Activated CD4-positive, alpha-beta memory T cell treated with anti-CD3 and anti-CD28 coated beads for 36 hours (primary cell): ENCODE measurements at regions of chr12 and their contacts with region 1.

Region 1: GRCh38 chr12:67482751-67483671 is 165.5 kb upstream of the DYRK2 start:
- DNase-seq: peak; percentile 86
- H3K4me3 Mint-ChIP-seq: no peak overlapping the region
- H3K27ac Mint-ChIP-seq: peak overlapping the region; percentile 5
- H3K4me1 Mint-ChIP-seq: peaks cover 41% of the 10 kb centered on the region
- H3K27me3 Mint-ChIP-seq: no peaks in the 10 kb centered on the region

Region 2: GRCh38 chr12:67202043-67203012 is 280.7 kb before region 1 on chr12:
- CTCF ChIA-PET with region 1: no interaction called
- POLR2A ChIA-PET with region 1: no interaction called
- intact Hi-C with region 1: no loop called
- DNase-seq: no peak
- H3K4me3 Mint-ChIP-seq: no peak overlapping the region
- H3K27ac Mint-ChIP-seq: no peak overlapping the region
- H3K4me1 Mint-ChIP-seq: no peaks in the 10 kb centered on the region
- H3K27me3 Mint-ChIP-seq: peaks cover 20% of the 10 kb centered on the region

Region 3: DNA sequence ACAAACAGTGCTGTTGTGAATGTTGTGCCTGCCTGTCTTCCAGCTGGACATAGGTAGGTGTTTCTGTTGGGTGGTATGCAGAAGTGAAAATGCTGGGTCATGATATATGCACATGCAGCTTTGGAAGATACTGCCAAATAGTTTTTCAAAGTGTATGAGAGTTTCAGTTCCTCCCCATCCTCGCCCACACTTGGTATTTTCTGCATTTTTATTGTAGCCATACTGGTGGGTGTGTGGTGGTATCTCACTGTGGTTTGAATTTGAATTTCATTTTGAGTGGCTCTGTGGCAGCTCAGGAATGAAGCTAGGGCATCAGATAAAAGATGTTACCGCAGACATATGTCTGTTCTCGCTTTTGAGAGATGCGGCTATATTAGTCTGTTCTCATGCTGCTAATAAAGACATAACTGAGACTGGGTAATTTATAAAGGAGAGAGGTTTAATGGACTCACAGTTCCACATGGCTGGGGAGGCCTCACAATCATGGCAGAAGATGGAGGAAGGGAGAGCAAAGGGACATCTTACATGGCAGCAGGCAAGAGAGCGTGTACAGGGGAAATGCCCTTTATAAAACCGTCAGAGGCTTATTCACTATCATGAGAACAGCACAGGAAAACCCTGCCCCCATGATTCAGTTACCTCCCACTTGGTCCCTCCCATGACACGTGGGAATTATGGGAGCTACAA is 30.7 kb before region 1 on chr12:
- CTCF ChIA-PET with region 1: no interaction called
- POLR2A ChIA-PET with region 1: no interaction called
- intact Hi-C with region 1: loop called (anchors 2 kb)
- DNase-seq: peak; percentile 42
- H3K4me3 Mint-ChIP-seq: peak overlapping the region; percentile 1
- H3K27ac Mint-ChIP-seq: no peak overlapping the region
- H3K4me1 Mint-ChIP-seq: peaks cover 48% of the 10 kb centered on the region
- H3K27me3 Mint-ChIP-seq: peaks cover 4% of the 10 kb centered on the region

Region 4: DNA sequence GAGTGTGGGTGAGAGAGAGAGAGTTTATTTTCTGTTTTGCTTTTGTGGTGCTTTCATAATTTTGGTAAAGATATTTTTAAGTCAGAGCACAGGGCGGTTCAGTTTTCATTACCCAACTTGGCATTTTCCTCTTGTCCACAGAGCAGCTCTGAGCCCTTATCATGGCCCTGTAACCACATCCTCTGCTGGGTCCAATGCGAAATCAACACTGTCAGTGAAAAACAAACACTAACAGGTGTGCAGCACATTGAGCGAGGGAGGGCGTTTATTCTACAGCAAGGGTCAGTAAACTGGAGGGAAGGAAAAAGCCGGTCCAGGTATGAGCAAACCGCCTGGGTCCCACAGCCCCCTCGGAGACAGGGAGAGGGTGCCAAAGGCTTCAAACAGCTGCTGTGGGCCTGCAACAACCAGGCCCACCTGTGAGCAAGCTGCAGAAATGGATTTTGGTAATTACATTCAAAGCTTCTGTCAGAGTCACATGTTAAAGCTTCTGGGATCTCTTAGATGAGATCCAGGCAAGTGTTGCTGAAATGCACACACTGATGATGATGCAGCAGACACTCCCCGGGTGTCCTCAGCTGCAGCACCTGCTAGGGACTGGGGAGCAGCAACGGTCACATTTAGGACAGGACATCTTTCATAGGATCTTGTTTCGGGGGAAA is 32.8 kb after region 1 on chr12:
- CTCF ChIA-PET with region 1: no interaction called
- POLR2A ChIA-PET with region 1: no interaction called
- intact Hi-C with region 1: loop called (anchors 1 kb)
- DNase-seq: peak; percentile 38
- H3K4me3 Mint-ChIP-seq: peak overlapping the region; percentile 2
- H3K27ac Mint-ChIP-seq: peak overlapping the region; percentile 50
- H3K4me1 Mint-ChIP-seq: peaks cover 47% of the 10 kb centered on the region
- H3K27me3 Mint-ChIP-seq: no peaks in the 10 kb centered on the region

Region 5: DNA sequence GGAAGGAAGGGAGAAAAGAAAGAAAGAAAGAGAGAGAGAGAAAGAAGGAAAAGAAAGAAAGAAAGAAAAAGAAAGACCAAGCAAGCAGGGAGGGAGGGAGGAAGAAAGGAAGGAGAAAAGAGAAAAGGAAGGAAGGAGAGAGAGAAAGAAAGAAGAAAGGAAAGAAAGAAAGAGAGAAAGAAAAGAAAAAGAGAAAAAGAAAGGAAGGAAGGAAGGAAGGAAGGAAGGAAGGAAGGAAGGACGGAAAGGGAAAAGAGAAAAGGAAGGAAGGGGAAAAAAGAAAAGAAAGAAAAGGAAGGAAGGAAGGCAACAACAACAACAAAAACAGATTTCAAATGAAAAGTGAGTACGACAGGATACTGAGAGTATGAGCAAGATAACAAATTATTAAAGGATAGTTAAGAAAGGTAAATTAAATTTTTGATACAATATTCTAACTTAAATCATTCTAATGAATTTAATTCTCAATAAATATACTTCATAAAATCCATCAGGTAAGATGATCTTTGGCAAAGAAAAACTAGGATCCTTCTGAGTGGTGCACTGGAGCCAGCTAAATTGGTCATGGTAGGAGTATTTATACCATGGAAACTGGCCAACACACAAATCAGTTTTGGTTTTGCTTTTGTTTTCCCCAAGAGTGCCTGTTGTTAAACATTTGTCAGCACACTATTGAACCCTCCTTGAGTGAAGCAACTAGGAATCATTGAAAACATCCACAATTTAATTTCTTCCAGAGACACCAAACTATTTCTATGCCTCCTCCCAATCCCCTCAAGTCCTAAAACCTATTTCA is 109.4 kb after region 1 on chr12:
- CTCF ChIA-PET with region 1: no interaction called
- POLR2A ChIA-PET with region 1: no interaction called
- intact Hi-C with region 1: loop called (anchors 5 kb)
- DNase-seq: no peak
- H3K4me3 Mint-ChIP-seq: no peak overlapping the region
- H3K27ac Mint-ChIP-seq: peak overlapping the region; percentile 67
- H3K4me1 Mint-ChIP-seq: peaks cover 47% of the 10 kb centered on the region
- H3K27me3 Mint-ChIP-seq: no peaks in the 10 kb centered on the region